ENCODE measurements at regions of chr10 and their contacts with region 1.

Region 1: GRCh38 chr10:56003555-56003954 is 357.5 kb downstream of the ZWINT start:
- DNase-seq: no peak
- H3K4me3 ChIP-seq: no peak overlapping the region
- H3K27ac ChIP-seq: no peak overlapping the region
- H3K4me1 ChIP-seq: no peaks in the 10 kb centered on the region
- H3K27me3 ChIP-seq: no peaks in the 10 kb centered on the region
- CTCF ChIP-seq: no peak

Region 2: DNA sequence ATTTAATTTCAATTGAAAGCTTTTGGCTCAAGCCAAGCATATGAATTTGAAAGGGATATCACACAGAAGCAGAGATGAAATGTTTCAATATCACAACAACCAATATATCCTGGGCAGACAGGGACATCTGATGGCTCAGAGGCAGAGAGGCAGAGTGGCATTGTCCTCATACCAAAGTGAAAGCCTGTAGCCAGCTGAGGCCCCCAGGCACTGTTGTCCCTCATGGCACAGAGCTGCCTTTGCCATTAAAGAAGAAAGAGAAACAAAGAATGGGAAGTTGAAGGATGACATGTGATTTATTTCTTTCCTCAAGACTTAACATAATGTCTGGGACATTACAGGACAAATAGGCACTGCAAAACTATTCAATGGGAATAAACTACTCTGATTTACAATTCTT is 698.3 kb before region 1 on chr10:
- CTCF ChIA-PET with region 1: no interaction called
- POLR2A ChIA-PET with region 1: no interaction called
- intact Hi-C with region 1: no loop called
- DNase-seq: no peak
- H3K4me3 ChIP-seq: no peak overlapping the region
- H3K27ac ChIP-seq: no peak overlapping the region
- H3K4me1 ChIP-seq: no peaks in the 10 kb centered on the region
- H3K27me3 ChIP-seq: no peaks in the 10 kb centered on the region
- CTCF ChIP-seq: no peak

Region 3: DNA sequence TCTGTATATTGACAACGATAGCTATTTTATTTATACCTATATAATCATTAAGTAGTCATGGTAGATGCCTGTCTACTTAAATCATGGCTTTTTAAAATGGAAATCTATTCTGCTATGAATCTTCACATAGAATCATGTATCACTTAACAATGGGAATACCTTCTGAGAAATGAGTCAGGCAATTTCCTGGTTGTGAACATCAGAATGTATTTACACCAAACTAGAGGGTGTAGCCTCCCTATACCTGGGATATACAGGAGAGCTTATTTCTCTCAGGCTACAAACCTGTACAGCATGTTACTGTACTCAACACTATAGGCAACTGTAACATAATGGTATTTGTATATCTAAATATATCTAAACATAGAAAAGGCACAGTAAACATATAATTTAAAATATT is 144.8 kb before region 1 on chr10:
- CTCF ChIA-PET with region 1: interaction called, 10 read pairs
- POLR2A ChIA-PET with region 1: no interaction called
- intact Hi-C with region 1: no loop called
- DNase-seq: no peak
- H3K4me3 ChIP-seq: no peak overlapping the region
- H3K27ac ChIP-seq: no peak overlapping the region
- H3K4me1 ChIP-seq: no peaks in the 10 kb centered on the region
- H3K27me3 ChIP-seq: no peaks in the 10 kb centered on the region
- CTCF ChIP-seq: no peak

Region 4: GRCh38 chr10:56327117-56327516 is 323.6 kb after region 1 on chr10:
- CTCF ChIA-PET with region 1: no interaction called
- POLR2A ChIA-PET with region 1: no interaction called
- intact Hi-C with region 1: no loop called
- DNase-seq: no peak
- H3K4me3 ChIP-seq: no peak overlapping the region
- H3K27ac ChIP-seq: no peak overlapping the region
- H3K4me1 ChIP-seq: no peaks in the 10 kb centered on the region
- H3K27me3 ChIP-seq: no peaks in the 10 kb centered on the region
- CTCF ChIP-seq: no peak